Naive thymus-derived CD4-positive, alpha-beta T cell (primary cell): ENCODE measurements at regions of chr10 and their contacts with region 1.

Region 1: GRCh38 chr10:21495752-21496342 is 29.6 kb downstream of the SKIDA1 start:
- DNase-seq: peak; percentile 74 to 97 (median 89)
- ATAC-seq: peak; percentile 94
- H3K4me3 ChIP-seq: peak overlapping the region; percentile 79
- H3K4me3 Mint-ChIP-seq: peak overlapping the region; percentile 86 to 95 (median 90)
- H3K27ac ChIP-seq: no peak overlapping the region
- H3K27ac Mint-ChIP-seq: peak overlapping the region in 6 of 9 donors; percentile 47 to 76 (median 55)
- H3K4me1 ChIP-seq: peaks cover 20% of the 10 kb centered on the region in 2 donors
- H3K4me1 Mint-ChIP-seq: peaks cover 19 to 38% (median 25%) of the 10 kb centered on the region in 7 donors
- H3K27me3 ChIP-seq: peaks cover 0 to 32% of the 10 kb centered on the region in 2 donors
- H3K27me3 Mint-ChIP-seq: peaks cover 47 to 81% (median 52%) of the 10 kb centered on the region in 5 donors

Region 2: GRCh38 chr10:21525367-21526183 is 29.7 kb after region 1 on chr10 and contains the start of gene SKIDA1:
- CTCF ChIA-PET with region 1: interaction called, 3 read pairs
- POLR2A ChIA-PET with region 1: interaction called, 13 read pairs
- intact Hi-C with region 1: no loop called
- DNase-seq: peak; percentile 31 to 72 (median 64)
- ATAC-seq: peak; percentile 73
- H3K4me3 ChIP-seq: peak within 1 kb of the TSS; percentile 79
- H3K4me3 Mint-ChIP-seq: peak within 1 kb of the TSS; percentile 85 to 99 (median 96)
- H3K27ac ChIP-seq: peak within 1 kb of the TSS; percentile 68
- H3K27ac Mint-ChIP-seq: peak within 1 kb of the TSS; percentile 87 to 98 (median 97)
- H3K4me1 ChIP-seq: peaks cover 4 to 17% of the 10 kb centered on the region in 2 donors
- H3K4me1 Mint-ChIP-seq: peaks cover 16 to 39% (median 38%) of the 10 kb centered on the region in 7 donors
- H3K27me3 ChIP-seq: peaks cover 4 to 6% of the 10 kb centered on the region in 2 donors
- H3K27me3 Mint-ChIP-seq: peaks cover 20 to 70% (median 38%) of the 10 kb centered on the region in 5 donors
- total RNA-seq, gene SKIDA1: 0.17 to 0.45 (median 0.28) TPM in 4 of 5 experiments, not detected in the other

Region 3: GRCh38 chr10:21638681-21639080 is 142.8 kb after region 1 on chr10:
- CTCF ChIA-PET with region 1: no interaction called
- POLR2A ChIA-PET with region 1: no interaction called
- intact Hi-C with region 1: no loop called
- DNase-seq: no peak
- ATAC-seq: no peak
- H3K4me3 ChIP-seq: no peak overlapping the region
- H3K4me3 Mint-ChIP-seq: no peak overlapping the region
- H3K27ac ChIP-seq: no peak overlapping the region
- H3K27ac Mint-ChIP-seq: no peak overlapping the region
- H3K4me1 ChIP-seq: no peaks in the 10 kb centered on the region
- H3K4me1 Mint-ChIP-seq: peaks cover 7 to 61% (median 31%) of the 10 kb centered on the region in 7 donors
- H3K27me3 ChIP-seq: no peaks in the 10 kb centered on the region
- H3K27me3 Mint-ChIP-seq: no peaks in the 10 kb centered on the region

Region 4: GRCh38 chr10:21675157-21675796 is 179.4 kb after region 1 on chr10:
- CTCF ChIA-PET with region 1: interaction called, 3 read pairs
- POLR2A ChIA-PET with region 1: no interaction called
- intact Hi-C with region 1: loop called in 1 of 2 experiments (anchors 1 kb)
- DNase-seq: peak in 5 of 9 donors; percentile 8 to 35 (median 14)
- ATAC-seq: peak; percentile 73
- H3K4me3 ChIP-seq: no peak overlapping the region
- H3K4me3 Mint-ChIP-seq: no peak overlapping the region
- H3K27ac ChIP-seq: no peak overlapping the region
- H3K27ac Mint-ChIP-seq: no peak overlapping the region
- H3K4me1 ChIP-seq: no peaks in the 10 kb centered on the region
- H3K4me1 Mint-ChIP-seq: peaks cover 4 to 31% (median 20%) of the 10 kb centered on the region in 7 donors
- H3K27me3 ChIP-seq: no peaks in the 10 kb centered on the region
- H3K27me3 Mint-ChIP-seq: no peaks in the 10 kb centered on the region

Region 5: DNA sequence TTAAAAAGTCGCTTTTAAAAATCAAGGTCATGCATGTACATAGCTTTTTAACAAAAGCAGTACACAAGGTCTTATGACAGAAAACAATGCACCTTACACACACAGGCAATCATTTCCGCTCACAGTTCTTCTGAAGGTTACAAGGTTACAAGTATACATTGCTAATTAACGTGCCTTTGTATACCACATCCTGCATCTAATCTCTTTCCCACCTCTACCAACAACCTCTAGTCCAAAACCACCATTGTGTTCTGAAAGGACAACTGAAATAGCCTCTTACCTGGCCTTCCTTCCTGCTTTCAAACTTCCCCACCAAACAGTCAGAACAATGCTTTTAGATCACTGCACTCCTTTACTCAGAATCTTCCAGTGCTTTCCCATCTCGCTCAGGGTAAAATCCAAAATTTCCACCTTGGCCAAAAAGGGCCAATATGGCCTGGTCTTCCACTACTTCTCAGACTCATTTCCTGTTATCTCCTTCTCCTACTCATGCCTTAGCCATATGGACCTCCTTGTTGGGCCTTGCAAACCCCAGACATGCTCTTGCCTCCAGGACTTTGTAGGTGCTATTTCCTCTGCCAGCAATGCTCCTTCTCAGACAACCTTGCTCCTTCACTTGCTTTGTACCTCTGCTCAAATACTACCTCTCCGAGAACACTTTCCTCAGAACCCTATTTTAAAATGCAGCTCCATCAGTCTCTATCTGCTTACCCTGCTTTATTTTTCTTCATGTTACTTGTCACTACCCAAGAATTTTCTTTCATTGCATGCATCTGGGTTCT is 302.3 kb after region 1 on chr10:
- CTCF ChIA-PET with region 1: no interaction called
- POLR2A ChIA-PET with region 1: no interaction called
- intact Hi-C with region 1: loop called in 1 of 2 experiments (anchors 5 kb)
- DNase-seq: peak in 6 of 9 donors; percentile 23 to 67 (median 54)
- ATAC-seq: peak; percentile 84
- H3K4me3 ChIP-seq: no peak overlapping the region
- H3K4me3 Mint-ChIP-seq: peak overlapping the region in 8 of 10 donors; percentile 18 to 82 (median 44)
- H3K27ac ChIP-seq: peak overlapping the region; percentile 33
- H3K27ac Mint-ChIP-seq: peak overlapping the region; percentile 58 to 95 (median 89)
- H3K4me1 ChIP-seq: peaks cover 8 to 23% of the 10 kb centered on the region in 2 donors
- H3K4me1 Mint-ChIP-seq: peaks cover 14 to 37% (median 35%) of the 10 kb centered on the region in 7 donors
- H3K27me3 ChIP-seq: no peaks in the 10 kb centered on the region
- H3K27me3 Mint-ChIP-seq: no peaks in the 10 kb centered on the region

Region 6: GRCh38 chr10:22003079-22003913 is 507.4 kb after region 1 on chr10 and contains the start of gene DNAJC1:
- CTCF ChIA-PET with region 1: interaction called, 3 read pairs
- POLR2A ChIA-PET with region 1: no interaction called
- intact Hi-C with region 1: loop called (anchors 1 to 5 kb)
- DNase-seq: peak; percentile 94 to 99 (median 97)
- ATAC-seq: peak; percentile 97
- H3K4me3 ChIP-seq: peak within 1 kb of the TSS; percentile 87
- H3K4me3 Mint-ChIP-seq: peak within 1 kb of the TSS; percentile 81 to 99 (median 94)
- H3K27ac ChIP-seq: peak within 1 kb of the TSS; percentile 82
- H3K27ac Mint-ChIP-seq: peak within 1 kb of the TSS; percentile 78 to 94 (median 92)
- H3K4me1 ChIP-seq: peaks cover 18 to 19% of the 10 kb centered on the region in 2 donors
- H3K4me1 Mint-ChIP-seq: peaks cover 7 to 42% (median 29%) of the 10 kb centered on the region in 7 donors
- H3K27me3 ChIP-seq: no peaks in the 10 kb centered on the region
- H3K27me3 Mint-ChIP-seq: peaks cover 0 to 15% (median 4%) of the 10 kb centered on the region in 5 donors
- total RNA-seq, gene DNAJC1: 11.0 to 23.9 (median 12.1) TPM

Region 7: DNA sequence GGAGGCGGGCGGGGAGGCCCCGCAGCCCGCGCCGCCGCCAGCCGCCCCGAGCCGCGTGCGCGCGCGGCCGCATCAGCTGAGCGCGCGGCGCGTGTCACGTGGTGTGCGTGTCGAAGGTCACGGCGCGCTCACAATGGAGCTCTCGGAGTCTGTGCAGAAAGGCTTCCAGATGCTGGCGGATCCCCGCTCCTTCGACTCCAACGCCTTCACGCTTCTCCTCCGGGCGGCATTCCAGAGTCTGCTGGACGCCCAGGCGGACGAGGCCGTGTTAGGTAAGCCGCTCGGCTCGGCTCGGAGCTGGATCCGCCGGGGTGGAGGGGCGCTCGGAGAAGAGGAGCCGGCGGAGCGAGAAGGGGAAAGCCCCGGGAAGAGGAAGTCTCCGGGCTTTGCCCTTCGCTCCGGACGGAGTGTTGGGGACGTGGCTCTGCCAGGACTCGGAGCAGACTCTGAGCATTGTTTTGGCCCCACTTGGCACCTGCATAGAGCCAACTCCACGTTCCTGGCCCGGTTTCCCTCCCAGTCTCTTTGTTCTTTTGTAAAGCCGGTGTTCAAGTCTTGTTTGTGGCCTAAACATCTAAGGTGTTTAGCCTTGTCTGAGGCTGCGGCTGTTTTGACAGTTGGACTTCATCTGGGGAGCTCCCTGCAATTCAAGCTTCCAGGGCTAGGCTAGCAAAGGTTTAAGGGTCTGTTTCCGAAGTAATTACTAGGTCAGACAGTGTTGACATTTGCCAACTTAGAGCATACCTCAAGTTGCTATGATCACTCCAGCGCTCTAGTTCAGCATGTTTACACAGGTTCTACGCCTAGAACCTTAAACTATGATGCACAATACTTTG is 820.7 kb after region 1 on chr10 and contains the start of gene COMMD3:
- CTCF ChIA-PET with region 1: no interaction called
- POLR2A ChIA-PET with region 1: no interaction called
- intact Hi-C with region 1: loop called in 1 of 2 experiments (anchors 1 kb)
- DNase-seq: peak; percentile 71 to 85 (median 80)
- ATAC-seq: peak; percentile 84
- H3K4me3 ChIP-seq: peak within 1 kb of the TSS; percentile 73
- H3K4me3 Mint-ChIP-seq: peak within 1 kb of the TSS; percentile 85 to 99 (median 96)
- H3K27ac ChIP-seq: peak within 1 kb of the TSS; percentile 80
- H3K27ac Mint-ChIP-seq: peak within 1 kb of the TSS; percentile 87 to 99 (median 96)
- H3K4me1 ChIP-seq: peaks cover 16 to 25% of the 10 kb centered on the region in 2 donors
- H3K4me1 Mint-ChIP-seq: peaks cover 11 to 53% (median 46%) of the 10 kb centered on the region in 7 donors
- H3K27me3 ChIP-seq: peaks cover 0 to 13% of the 10 kb centered on the region in 2 donors
- H3K27me3 Mint-ChIP-seq: peaks cover 0 to 18% (median 14%) of the 10 kb centered on the region in 5 donors
- total RNA-seq, gene COMMD3: 33.9 to 83.7 (median 51.2) TPM

Region 8: DNA sequence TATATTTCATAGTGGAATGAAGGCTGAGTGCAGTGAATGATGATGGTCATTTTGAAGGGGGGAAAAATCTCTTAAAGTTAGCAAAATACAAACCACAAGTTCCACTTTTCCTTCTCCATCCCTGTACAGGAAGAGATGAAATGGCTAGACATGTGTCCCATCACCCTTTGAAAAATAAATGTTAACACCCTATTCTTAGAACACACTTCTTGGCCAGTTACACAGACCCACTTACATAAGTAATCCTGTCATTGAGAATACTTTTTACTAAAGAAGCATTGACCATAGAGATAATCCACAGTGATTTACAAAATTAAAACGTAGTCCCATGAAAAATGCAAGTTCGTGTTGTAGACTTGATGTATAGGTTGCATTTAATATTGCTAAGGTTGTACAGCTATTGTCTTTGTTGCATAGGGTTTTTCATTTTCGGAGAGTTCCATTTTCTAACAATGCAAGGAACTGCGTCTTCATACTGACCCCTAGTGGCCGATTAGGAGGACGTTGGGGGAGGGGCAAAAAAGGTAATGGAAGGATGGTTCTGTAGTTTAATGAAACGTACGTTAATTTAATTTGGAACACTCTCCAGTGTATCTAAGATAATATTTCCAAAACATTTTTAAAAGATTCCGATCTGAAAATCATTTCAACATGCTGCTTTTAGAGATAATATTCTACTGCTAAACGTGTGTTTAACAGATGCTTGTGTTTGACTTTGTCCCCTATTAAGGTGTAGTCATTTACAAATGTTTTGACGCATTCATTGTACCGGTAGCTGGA is 1492.9 kb after region 1 on chr10:
- CTCF ChIA-PET with region 1: interaction called, 3 read pairs
- POLR2A ChIA-PET with region 1: no interaction called
- intact Hi-C with region 1: loop called (anchors 1 to 5 kb)
- DNase-seq: peak; percentile 14 to 83 (median 77)
- ATAC-seq: peak; percentile 94
- H3K4me3 ChIP-seq: no peak overlapping the region
- H3K4me3 Mint-ChIP-seq: peak overlapping the region in 4 of 10 donors; percentile 28 to 35 (median 30)
- H3K27ac ChIP-seq: no peak overlapping the region
- H3K27ac Mint-ChIP-seq: peak overlapping the region in 4 of 9 donors; percentile 17 to 65 (median 54)
- H3K4me1 ChIP-seq: peaks cover 0 to 4% of the 10 kb centered on the region in 2 donors
- H3K4me1 Mint-ChIP-seq: peaks cover 0 to 25% (median 18%) of the 10 kb centered on the region in 7 donors
- H3K27me3 ChIP-seq: no peaks in the 10 kb centered on the region
- H3K27me3 Mint-ChIP-seq: peaks cover 0 to 22% (median under 1%) of the 10 kb centered on the region in 5 donors